Posterior vena cava (tissue), 2 donors: ENCODE measurements at regions of chr15 and their contacts with region 1.

Region 1: GRCh38 chr15:78241007-78241406 is 6.6 kb upstream of the ACSBG1 start:
- DNase-seq: peak; percentile 95

Region 2: DNA sequence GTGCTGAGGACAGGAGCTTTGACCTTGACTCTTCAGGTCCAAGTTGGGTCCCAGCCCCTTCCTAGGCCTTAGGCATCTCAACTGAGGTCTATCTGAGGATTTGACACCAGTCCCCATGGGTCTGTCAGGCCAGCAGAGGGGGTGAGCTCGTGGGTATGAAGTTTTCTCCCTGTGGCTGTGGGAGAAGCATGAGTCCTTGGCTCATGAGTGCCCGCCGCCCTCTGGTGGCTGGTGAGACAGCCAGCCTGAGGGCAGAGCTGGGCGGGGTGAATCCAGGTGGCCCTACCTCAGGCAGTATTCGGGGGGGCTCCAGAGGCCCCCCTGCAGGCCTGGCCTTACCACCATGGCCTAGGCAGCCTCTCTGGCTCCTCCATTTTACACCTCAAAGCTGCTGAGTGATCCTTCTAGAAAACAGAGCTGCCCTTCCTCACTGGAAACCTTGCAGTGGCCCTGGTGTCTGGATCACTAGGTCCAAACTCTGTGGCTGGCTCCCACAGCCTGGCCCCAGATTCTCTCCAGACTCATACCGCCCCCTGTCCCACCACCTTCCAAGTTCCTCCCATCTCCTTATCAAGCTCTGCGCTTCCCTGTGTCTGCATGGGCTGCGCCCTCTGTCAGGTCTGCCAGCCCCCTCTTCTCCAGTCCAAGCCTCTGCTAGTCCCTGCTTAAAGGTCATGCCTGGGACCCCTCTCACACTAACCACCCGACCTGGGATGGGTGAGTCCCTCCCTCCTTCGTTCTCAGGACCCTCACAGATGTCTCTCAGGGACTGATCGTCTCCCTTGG is 132.5 kb before region 1 on chr15:
- intact Hi-C with region 1: loop called in 1 of 2 experiments (anchors 5 kb)
- DNase-seq: peak; percentile 95

Region 3: GRCh38 chr15:78120523-78120922 is 120.5 kb before region 1 on chr15:
- intact Hi-C with region 1: loop called in 1 of 2 experiments (anchors 5 kb)
- DNase-seq: no peak

Region 4: GRCh38 chr15:78131295-78132061 is 109.5 kb before region 1 on chr15 and contains the start of gene CIB2:
- intact Hi-C with region 1: loop called in 1 of 2 experiments (anchors 5 kb)
- DNase-seq: peak; percentile 89
- total RNA-seq, gene CIB2: 5.1 to 6.7 TPM

Region 5: DNA sequence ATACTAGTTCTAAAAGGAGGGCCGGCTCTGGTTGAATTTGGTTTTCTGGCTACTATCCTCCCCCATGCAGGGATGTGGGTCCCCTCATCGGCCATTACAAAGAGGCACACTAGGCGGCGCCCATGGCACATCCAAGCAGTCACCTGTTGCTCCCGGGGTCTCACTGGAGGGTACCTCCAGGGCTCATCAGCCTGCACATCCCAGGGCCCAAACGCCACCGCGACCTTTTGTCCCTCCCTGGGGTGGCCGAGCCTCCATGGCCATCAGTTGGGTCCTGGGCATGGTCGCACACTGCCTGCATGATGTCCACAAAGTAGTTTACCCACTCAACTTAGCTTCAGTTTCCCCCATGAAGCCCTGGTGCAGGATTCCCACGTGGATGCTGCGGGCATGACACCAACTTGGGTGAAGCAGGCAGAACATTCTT is 63.5 kb before region 1 on chr15:
- intact Hi-C with region 1: loop called in 1 of 2 experiments (anchors 5 kb)
- DNase-seq: no peak

Region 6: GRCh38 chr15:78195735-78196201 is 45.2 kb before region 1 on chr15:
- intact Hi-C with region 1: loop called in 1 of 2 experiments (anchors 1 kb)
- DNase-seq: peak; percentile 73